ENCODE measurements at regions of chr22 and their contacts with region 1.

Region 1: DNA sequence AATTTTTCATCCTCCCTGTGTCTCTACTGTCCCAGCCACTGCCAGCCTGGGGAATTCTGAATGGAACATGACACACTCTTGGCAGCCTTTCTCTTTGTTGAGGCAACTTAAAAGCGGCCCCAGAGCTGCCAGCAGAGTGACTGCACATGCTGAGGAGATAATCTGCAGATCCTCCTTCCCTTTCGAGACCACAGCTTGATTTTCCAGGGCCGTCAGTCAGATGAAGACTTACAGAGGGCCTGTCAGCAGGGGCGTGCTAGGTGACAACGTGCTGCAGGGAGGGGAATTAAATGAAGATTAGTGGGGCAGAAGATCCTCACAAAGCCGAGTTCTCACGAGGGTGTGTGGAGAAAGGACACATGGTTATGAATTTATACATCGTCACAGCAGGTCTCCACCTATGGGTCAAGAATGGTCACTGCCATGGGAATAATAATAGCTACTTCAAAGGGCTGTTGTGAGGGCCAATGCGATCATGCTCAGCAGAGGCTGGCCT is 193.5 kb upstream of the PITPNB start:
- DNase-seq: peak in 1 of 2 experiments; percentile 44
- H3K4me3 ChIP-seq: no peak overlapping the region
- H3K4me3 Mint-ChIP-seq: no peak overlapping the region
- H3K27ac Mint-ChIP-seq: no peak overlapping the region
- H3K4me1 ChIP-seq: no peaks in the 10 kb centered on the region
- H3K4me1 Mint-ChIP-seq: no peaks in the 10 kb centered on the region
- H3K27me3 ChIP-seq: no peaks in the 10 kb centered on the region; the same call in 1 of the 2 replicates
- H3K27me3 Mint-ChIP-seq: peaks cover 3% of the 10 kb centered on the region
- CTCF ChIP-seq: peak; percentile 45 to 47

Region 2: GRCh38 chr22:28019881-28020871 is 92.4 kb before region 1 on chr22:
- CTCF ChIA-PET with region 1: interaction called, 11 read pairs
- POLR2A ChIA-PET with region 1: no interaction called
- intact Hi-C with region 1: no loop called
- DNase-seq: peak; percentile 71 to 82
- H3K4me3 ChIP-seq: no peak overlapping the region
- H3K4me3 Mint-ChIP-seq: no peak overlapping the region
- H3K27ac Mint-ChIP-seq: no peak overlapping the region
- H3K4me1 ChIP-seq: peaks cover 7% of the 10 kb centered on the region; the same call in 1 of the 2 replicates
- H3K4me1 Mint-ChIP-seq: no peaks in the 10 kb centered on the region
- H3K27me3 ChIP-seq: no peaks in the 10 kb centered on the region
- H3K27me3 Mint-ChIP-seq: no peaks in the 10 kb centered on the region
- CTCF ChIP-seq: peak; percentile 91 to 93

Region 3: DNA sequence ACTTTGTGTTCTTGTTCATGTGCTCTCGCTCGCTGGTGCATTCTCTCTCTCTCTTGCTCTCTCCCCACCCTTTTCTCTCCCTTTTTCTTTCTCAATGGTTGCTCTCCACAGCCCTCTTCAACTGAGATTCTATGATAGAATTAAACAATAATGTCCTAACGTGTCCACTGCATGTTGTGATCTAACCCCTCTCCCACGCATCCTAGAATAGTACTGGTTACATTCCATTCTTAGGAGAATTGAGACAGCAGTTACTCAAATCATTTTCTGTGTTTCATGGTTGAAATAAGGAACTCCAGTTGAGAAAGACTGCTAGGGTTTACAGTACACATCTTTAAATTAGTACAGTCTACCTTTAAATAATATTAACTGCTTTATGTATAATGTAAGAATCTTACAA is 124.5 kb after region 1 on chr22:
- CTCF ChIA-PET with region 1: no interaction called
- POLR2A ChIA-PET with region 1: no interaction called
- intact Hi-C with region 1: no loop called
- DNase-seq: no peak
- H3K4me3 ChIP-seq: no peak overlapping the region
- H3K4me3 Mint-ChIP-seq: no peak overlapping the region
- H3K27ac Mint-ChIP-seq: no peak overlapping the region
- H3K4me1 ChIP-seq: no peaks in the 10 kb centered on the region
- H3K4me1 Mint-ChIP-seq: peaks cover 6% of the 10 kb centered on the region
- H3K27me3 ChIP-seq: no peaks in the 10 kb centered on the region
- H3K27me3 Mint-ChIP-seq: peaks cover 7% of the 10 kb centered on the region
- CTCF ChIP-seq: no peak